Endothelial cell of umbilical vein (primary cell): ENCODE measurements at regions of chr21 and their contacts with region 1.

Region 1: GRCh38 chr21:35400233-35400957 is 351.3 kb upstream of the RUNX1 start:
- DNase-seq: peak; percentile 73
- H3K4me3 ChIP-seq: no peak overlapping the region
- H3K27ac ChIP-seq: no peak overlapping the region
- H3K4me1 ChIP-seq: peaks cover 7% of the 10 kb centered on the region
- H3K27me3 ChIP-seq: peaks cover 0 to 2% of the 10 kb centered on the region in 2 experiments
- CTCF ChIP-seq: peak; percentile 24 to 29
- POLR2A ChIP-seq: no peak

Region 2: DNA sequence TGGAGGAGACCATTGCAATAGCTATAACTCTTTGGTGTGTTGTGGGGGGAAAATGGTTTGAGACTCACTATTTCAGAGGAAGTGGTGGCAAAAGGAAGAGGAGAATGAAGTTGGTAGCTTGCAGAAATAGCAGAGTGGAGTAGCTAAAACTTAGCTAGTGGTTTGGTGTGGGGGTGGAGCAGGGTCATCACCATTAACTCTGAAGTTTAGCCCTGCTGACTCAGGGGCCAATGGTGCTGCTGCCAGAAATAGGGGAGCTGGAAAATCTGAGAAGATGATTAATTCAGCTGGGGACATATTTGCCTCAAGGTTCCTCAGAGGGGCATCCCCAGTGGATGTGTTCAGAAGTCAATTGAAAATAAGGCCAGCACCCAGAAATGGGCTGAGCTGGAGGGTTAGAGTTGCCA is 416.7 kb before region 1 on chr21:
- CTCF ChIA-PET with region 1: interaction called, 10 read pairs
- POLR2A ChIA-PET with region 1: no interaction called
- dilution Hi-C with region 1: no loop called
- intact Hi-C with region 1: no loop called
- DNase-seq: peak; percentile 40
- H3K4me3 ChIP-seq: no peak overlapping the region
- H3K27ac ChIP-seq: peak overlapping the region; percentile 90
- H3K4me1 ChIP-seq: peaks cover 19% of the 10 kb centered on the region
- H3K27me3 ChIP-seq: peaks cover 2 to 10% of the 10 kb centered on the region in 2 experiments
- CTCF ChIP-seq: no peak
- POLR2A ChIP-seq: no peak

Region 3: DNA sequence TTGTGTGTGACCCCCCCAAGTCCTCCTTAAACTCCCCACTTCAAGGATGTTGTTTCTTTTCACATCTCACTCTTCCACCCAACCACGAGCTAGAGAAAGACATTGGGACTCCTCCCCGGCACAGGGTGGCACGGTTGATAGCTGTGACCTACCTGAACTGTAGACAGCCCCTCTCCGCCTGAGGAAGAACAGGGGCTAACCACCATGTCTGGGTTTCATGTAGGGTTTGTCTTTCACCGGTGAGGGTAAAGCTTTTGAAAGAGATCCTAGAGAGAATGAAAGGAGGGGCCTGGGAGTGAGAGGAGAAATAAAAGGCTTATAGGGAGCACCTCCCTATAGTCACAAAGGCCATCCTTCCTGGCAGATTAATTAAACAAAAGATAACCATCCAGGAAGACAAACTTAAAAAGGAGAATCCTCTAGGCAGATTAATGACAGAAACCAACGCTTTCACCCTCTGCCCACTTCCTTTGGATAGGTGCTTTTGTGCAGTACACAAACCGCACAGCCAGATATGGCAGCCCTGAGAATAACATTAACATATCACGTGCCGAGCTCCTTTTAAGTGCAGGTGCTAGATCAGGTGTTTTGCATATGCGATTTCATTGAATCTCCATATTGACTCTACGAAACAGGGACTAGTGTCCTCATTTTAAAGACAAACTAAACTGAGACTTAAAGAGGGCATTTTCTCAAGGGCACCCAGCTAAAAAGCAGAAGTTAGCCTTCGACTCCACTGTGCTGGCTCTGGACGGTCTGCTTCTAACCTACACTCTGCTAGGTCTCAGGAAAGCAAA is 173.2 kb before region 1 on chr21:
- CTCF ChIA-PET with region 1: interaction called, 4 read pairs
- POLR2A ChIA-PET with region 1: interaction called, 13 read pairs
- dilution Hi-C with region 1: no loop called
- intact Hi-C with region 1: no loop called
- DNase-seq: no peak
- H3K4me3 ChIP-seq: no peak overlapping the region
- H3K27ac ChIP-seq: no peak overlapping the region
- H3K4me1 ChIP-seq: peaks cover 22% of the 10 kb centered on the region
- H3K27me3 ChIP-seq: no peaks in the 10 kb centered on the region
- CTCF ChIP-seq: no peak
- POLR2A ChIP-seq: no peak

Region 4: GRCh38 chr21:35375115-35375514 is 25.3 kb before region 1 on chr21:
- CTCF ChIA-PET with region 1: interaction called, 13 read pairs
- POLR2A ChIA-PET with region 1: no interaction called
- dilution Hi-C with region 1: no loop called
- intact Hi-C with region 1: no loop called
- DNase-seq: peak; percentile 66
- H3K4me3 ChIP-seq: no peak overlapping the region
- H3K27ac ChIP-seq: peak overlapping the region; percentile 66
- H3K4me1 ChIP-seq: peaks cover 50% of the 10 kb centered on the region
- H3K27me3 ChIP-seq: no peaks in the 10 kb centered on the region
- CTCF ChIP-seq: no peak
- POLR2A ChIP-seq: peak; percentile 41

Region 5: GRCh38 chr21:35840197-35840799 is 439.9 kb after region 1 on chr21:
- CTCF ChIA-PET with region 1: interaction called, 9 read pairs
- POLR2A ChIA-PET with region 1: no interaction called
- dilution Hi-C with region 1: no loop called
- intact Hi-C with region 1: loop called (anchors 10 kb)
- DNase-seq: peak; percentile 78
- H3K4me3 ChIP-seq: no peak overlapping the region
- H3K27ac ChIP-seq: no peak overlapping the region
- H3K4me1 ChIP-seq: no peaks in the 10 kb centered on the region
- H3K27me3 ChIP-seq: peaks cover 0 to 2% of the 10 kb centered on the region in 2 experiments
- CTCF ChIP-seq: peak; percentile 65 to 71
- POLR2A ChIP-seq: no peak